Naive thymus-derived CD4-positive, alpha-beta T cell (primary cell): ENCODE measurements at regions of chr2 and their contacts with region 1.

Region 1: GRCh38 chr2:117814417-117815264 is at the start of gene DDX18:
- DNase-seq: peak; percentile 91 to 99 (median 99)
- ATAC-seq: peak; percentile 94
- H3K4me3 ChIP-seq: peak within 1 kb of the TSS; percentile 79
- H3K4me3 Mint-ChIP-seq: peak within 1 kb of the TSS; percentile 88 to 95 (median 93)
- H3K27ac ChIP-seq: peak within 1 kb of the TSS; percentile 96
- H3K27ac Mint-ChIP-seq: peak within 1 kb of the TSS; percentile 94 to 100 (median 98)
- H3K4me1 ChIP-seq: peaks cover 14 to 24% of the 10 kb centered on the region in 2 donors
- H3K4me1 Mint-ChIP-seq: peaks cover 26 to 59% (median 52%) of the 10 kb centered on the region in 7 donors
- H3K27me3 ChIP-seq: no peaks in the 10 kb centered on the region
- H3K27me3 Mint-ChIP-seq: peaks cover 0 to 8% (median 0%) of the 10 kb centered on the region in 5 donors
- total RNA-seq, gene DDX18: 86.9 to 133 (median 111) TPM

Region 2: DNA sequence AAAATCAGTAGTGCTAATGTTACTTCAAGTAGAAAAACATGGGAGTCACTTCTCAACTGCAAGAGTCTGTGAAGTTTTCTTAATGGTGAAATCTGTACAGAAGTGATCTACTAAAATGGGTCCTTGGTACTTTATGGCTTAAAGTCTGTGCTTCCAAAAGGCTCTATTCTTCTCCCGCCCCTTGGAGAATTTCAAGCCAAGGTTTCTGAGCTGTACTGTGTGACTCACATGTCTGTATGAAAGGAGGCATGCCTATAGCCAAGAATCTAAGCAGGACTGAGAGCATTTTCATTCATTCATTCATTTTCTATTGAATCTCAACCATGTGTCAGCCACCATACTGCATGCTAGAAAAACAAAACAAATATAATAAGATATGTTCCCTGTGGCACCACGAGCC is 20.0 kb before region 1 on chr2:
- CTCF ChIA-PET with region 1: no interaction called
- POLR2A ChIA-PET with region 1: no interaction called
- intact Hi-C with region 1: no loop called
- DNase-seq: no peak
- ATAC-seq: no peak
- H3K4me3 ChIP-seq: no peak overlapping the region
- H3K4me3 Mint-ChIP-seq: no peak overlapping the region
- H3K27ac ChIP-seq: no peak overlapping the region
- H3K27ac Mint-ChIP-seq: no peak overlapping the region
- H3K4me1 ChIP-seq: no peaks in the 10 kb centered on the region
- H3K4me1 Mint-ChIP-seq: peaks cover 0 to 5% (median 0%) of the 10 kb centered on the region in 7 donors
- H3K27me3 ChIP-seq: no peaks in the 10 kb centered on the region
- H3K27me3 Mint-ChIP-seq: peaks cover 0 to 38% (median 31%) of the 10 kb centered on the region in 5 donors

Region 3: DNA sequence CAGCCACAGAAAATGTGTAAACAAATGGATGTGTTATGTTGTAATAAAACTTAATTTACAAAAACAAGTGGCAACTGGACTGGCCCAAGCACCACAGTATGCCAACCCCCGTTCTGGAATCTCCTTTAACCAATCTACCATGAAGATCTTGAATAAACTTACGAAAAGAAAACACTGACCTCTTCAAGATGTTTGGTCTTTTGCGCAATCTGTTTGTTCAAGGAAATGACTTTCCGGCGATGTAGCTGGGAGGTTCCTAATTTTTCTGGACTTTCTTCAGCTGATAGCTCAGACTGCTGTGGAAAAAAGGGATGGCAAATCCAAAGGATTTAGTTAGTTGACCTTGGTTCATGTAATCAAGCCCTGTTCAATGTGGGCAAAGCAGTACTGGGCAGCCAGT is 143.5 kb after region 1 on chr2:
- CTCF ChIA-PET with region 1: no interaction called
- POLR2A ChIA-PET with region 1: no interaction called
- intact Hi-C with region 1: loop called in 1 of 2 experiments (anchors 10 kb)
- DNase-seq: no peak
- ATAC-seq: no peak
- H3K4me3 ChIP-seq: no peak overlapping the region
- H3K4me3 Mint-ChIP-seq: no peak overlapping the region
- H3K27ac ChIP-seq: no peak overlapping the region
- H3K27ac Mint-ChIP-seq: no peak overlapping the region
- H3K4me1 ChIP-seq: no peaks in the 10 kb centered on the region
- H3K4me1 Mint-ChIP-seq: no peaks in the 10 kb centered on the region
- H3K27me3 ChIP-seq: no peaks in the 10 kb centered on the region
- H3K27me3 Mint-ChIP-seq: no peaks in the 10 kb centered on the region

Region 4: DNA sequence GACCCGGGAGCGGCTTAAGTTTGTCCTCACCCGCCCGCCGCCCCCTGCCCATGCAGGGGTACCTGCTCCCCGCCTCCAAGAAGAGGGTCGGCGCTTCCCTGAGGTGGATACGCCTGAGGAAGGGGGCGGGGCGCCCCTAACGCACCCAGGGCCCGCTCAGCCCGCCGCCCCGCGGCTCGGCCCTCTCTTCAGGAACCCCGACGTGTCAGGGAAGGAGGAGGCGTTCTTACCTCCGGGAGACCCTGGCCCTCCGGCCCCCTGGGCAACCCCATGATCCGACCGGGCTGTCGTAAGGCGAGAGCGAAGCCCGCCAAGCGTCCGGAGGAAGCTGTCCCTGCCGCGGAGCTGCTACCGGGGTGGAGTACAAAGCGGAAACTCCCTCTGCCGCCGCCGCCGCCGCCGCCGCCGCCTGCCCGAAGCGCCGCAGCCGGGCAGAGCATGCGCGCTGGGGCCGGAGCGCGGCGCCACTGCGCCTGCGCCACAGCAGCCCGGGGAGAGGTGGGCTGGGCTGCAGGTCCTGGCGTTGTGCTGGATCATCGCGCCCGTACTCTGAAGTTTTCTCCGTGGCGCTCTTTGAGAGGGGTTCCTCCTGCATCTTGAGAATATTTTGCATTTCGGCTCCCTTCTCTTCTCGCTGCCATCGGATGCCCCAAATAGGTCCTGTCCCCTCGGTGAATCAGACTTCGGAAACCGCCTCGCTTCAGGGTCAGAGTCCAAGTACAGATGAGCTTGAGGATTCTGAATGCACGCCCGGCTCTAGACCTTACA is 199.3 kb after region 1 on chr2 and contains the start of gene CCDC93:
- CTCF ChIA-PET with region 1: interaction called, 6 read pairs
- POLR2A ChIA-PET with region 1: interaction called, 5 read pairs
- intact Hi-C with region 1: loop called (anchors 1 kb)
- DNase-seq: peak; percentile 82 to 95 (median 91)
- ATAC-seq: peak; percentile 88
- H3K4me3 ChIP-seq: peak within 1 kb of the TSS; percentile 90
- H3K4me3 Mint-ChIP-seq: peak within 1 kb of the TSS; percentile 87 to 98 (median 95)
- H3K27ac ChIP-seq: peak within 1 kb of the TSS; percentile 98
- H3K27ac Mint-ChIP-seq: peak within 1 kb of the TSS; percentile 59 to 96 (median 90)
- H3K4me1 ChIP-seq: peaks cover 6 to 9% of the 10 kb centered on the region in 2 donors
- H3K4me1 Mint-ChIP-seq: peaks cover 30 to 69% (median 41%) of the 10 kb centered on the region in 7 donors
- H3K27me3 ChIP-seq: no peaks in the 10 kb centered on the region
- H3K27me3 Mint-ChIP-seq: peaks cover 0 to 6% (median 1%) of the 10 kb centered on the region in 5 donors
- total RNA-seq, gene CCDC93: 34.8 to 73.9 (median 51.5) TPM

Region 5: GRCh38 chr2:118186110-118186857 is 371.6 kb after region 1 on chr2:
- CTCF ChIA-PET with region 1: no interaction called
- POLR2A ChIA-PET with region 1: interaction called, 5 read pairs
- intact Hi-C with region 1: loop called (anchors 1 to 2 kb)
- DNase-seq: peak; percentile 77 to 91 (median 86)
- ATAC-seq: peak; percentile 97
- H3K4me3 ChIP-seq: peak overlapping the region; percentile 81
- H3K4me3 Mint-ChIP-seq: peak overlapping the region; percentile 89 to 98 (median 94)
- H3K27ac ChIP-seq: peak overlapping the region; percentile 74
- H3K27ac Mint-ChIP-seq: peak overlapping the region; percentile 88 to 98 (median 90)
- H3K4me1 ChIP-seq: peaks cover 6 to 9% of the 10 kb centered on the region in 2 donors
- H3K4me1 Mint-ChIP-seq: peaks cover 7 to 25% (median 21%) of the 10 kb centered on the region in 7 donors
- H3K27me3 ChIP-seq: no peaks in the 10 kb centered on the region
- H3K27me3 Mint-ChIP-seq: peaks cover 0 to 2% (median 0%) of the 10 kb centered on the region in 5 donors

Region 6: DNA sequence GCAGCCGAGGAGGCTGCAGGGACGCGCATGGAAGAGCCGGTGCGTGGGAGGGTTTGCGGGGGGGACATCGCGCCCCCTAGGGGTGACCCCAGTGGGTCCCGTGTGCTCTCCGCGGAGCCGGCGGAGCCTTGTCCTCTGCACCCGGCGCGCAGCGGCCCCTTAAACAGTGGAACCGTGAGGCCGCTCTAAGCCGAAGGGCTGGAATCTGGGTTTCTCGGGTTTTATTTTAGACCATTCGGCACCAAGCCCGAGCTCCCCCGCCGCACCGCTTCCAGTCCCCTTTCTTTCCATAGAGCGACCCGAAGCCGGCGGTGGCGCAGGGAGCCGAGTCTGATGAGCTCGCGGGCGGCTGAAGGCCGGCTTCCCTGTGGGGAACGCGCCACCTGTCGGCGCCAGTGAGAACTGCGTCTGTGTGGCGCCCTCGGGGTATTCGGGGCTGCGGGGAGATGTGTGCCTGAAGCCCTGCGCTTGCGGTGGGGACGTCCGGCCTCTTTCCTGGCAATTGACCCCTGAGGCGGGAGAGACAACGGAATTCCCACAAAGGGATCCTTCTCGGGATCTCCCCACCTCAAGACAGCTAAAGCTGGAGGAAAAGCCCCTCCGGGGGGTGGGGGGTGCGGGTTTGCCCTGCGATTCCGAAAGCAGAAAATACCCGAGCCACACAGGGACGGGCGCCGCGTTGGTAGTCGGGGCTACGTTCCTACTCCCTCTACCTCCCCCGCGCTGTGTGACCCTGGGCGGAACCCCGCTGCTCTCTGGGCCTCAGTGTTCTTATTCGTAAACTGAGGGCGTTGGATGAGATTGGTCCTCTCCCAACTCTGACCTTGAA is 1041.0 kb after region 1 on chr2:
- CTCF ChIA-PET with region 1: no interaction called
- POLR2A ChIA-PET with region 1: no interaction called
- intact Hi-C with region 1: loop called in 1 of 2 experiments (anchors 10 kb)
- DNase-seq: peak; percentile 61 to 90 (median 84)
- ATAC-seq: peak; percentile 93
- H3K4me3 ChIP-seq: peak overlapping the region; percentile 62
- H3K4me3 Mint-ChIP-seq: peak overlapping the region; percentile 37 to 81 (median 74)
- H3K27ac ChIP-seq: no peak overlapping the region
- H3K27ac Mint-ChIP-seq: peak overlapping the region in 2 of 9 donors; percentile 33 to 81
- H3K4me1 ChIP-seq: peaks cover 0 to 17% of the 10 kb centered on the region in 2 donors
- H3K4me1 Mint-ChIP-seq: peaks cover 19 to 38% (median 24%) of the 10 kb centered on the region in 7 donors
- H3K27me3 ChIP-seq: peaks cover 2 to 41% of the 10 kb centered on the region in 2 donors
- H3K27me3 Mint-ChIP-seq: peaks cover 70 to 93% (median 81%) of the 10 kb centered on the region in 5 donors